ENCODE measurements at regions of chr10 and their contacts with region 1.

Region 1: GRCh38 chr10:32271617-32272016 is 75.3 kb downstream of the EPC1 start:
- DNase-seq: no peak
- ATAC-seq: no peak
- H3K4me3 ChIP-seq: no peak overlapping the region
- H3K4me3 Mint-ChIP-seq: no peak overlapping the region
- H3K27ac ChIP-seq: no peak overlapping the region
- H3K27ac Mint-ChIP-seq: peak overlapping the region in 1 of 9 donors; percentile 49
- H3K4me1 ChIP-seq: no peaks in the 10 kb centered on the region
- H3K4me1 Mint-ChIP-seq: peaks cover 0 to 12% (median 5%) of the 10 kb centered on the region in 7 donors
- H3K27me3 ChIP-seq: no peaks in the 10 kb centered on the region
- H3K27me3 Mint-ChIP-seq: no peaks in the 10 kb centered on the region

Region 2: GRCh38 chr10:32308027-32308603 is 36.5 kb after region 1 on chr10:
- CTCF ChIA-PET with region 1: no interaction called
- POLR2A ChIA-PET with region 1: no interaction called
- intact Hi-C with region 1: loop called in 1 of 2 experiments (anchors 5 kb)
- DNase-seq: no peak
- ATAC-seq: peak; percentile 47
- H3K4me3 ChIP-seq: no peak overlapping the region
- H3K4me3 Mint-ChIP-seq: peak overlapping the region in 7 of 10 donors; percentile 10 to 63 (median 51)
- H3K27ac ChIP-seq: no peak overlapping the region
- H3K27ac Mint-ChIP-seq: peak overlapping the region in 8 of 9 donors; percentile 2 to 76 (median 62)
- H3K4me1 ChIP-seq: peaks cover 19 to 27% of the 10 kb centered on the region in 2 donors
- H3K4me1 Mint-ChIP-seq: peaks cover 42 to 94% (median 81%) of the 10 kb centered on the region in 7 donors
- H3K27me3 ChIP-seq: no peaks in the 10 kb centered on the region
- H3K27me3 Mint-ChIP-seq: no peaks in the 10 kb centered on the region

Measured in naive thymus-derived CD4-positive, alpha-beta T cell (primary cell).